Heart left ventricle (tissue), 16 donors: ENCODE measurements at regions of chr17 and their contacts with region 1.

Region 1: DNA sequence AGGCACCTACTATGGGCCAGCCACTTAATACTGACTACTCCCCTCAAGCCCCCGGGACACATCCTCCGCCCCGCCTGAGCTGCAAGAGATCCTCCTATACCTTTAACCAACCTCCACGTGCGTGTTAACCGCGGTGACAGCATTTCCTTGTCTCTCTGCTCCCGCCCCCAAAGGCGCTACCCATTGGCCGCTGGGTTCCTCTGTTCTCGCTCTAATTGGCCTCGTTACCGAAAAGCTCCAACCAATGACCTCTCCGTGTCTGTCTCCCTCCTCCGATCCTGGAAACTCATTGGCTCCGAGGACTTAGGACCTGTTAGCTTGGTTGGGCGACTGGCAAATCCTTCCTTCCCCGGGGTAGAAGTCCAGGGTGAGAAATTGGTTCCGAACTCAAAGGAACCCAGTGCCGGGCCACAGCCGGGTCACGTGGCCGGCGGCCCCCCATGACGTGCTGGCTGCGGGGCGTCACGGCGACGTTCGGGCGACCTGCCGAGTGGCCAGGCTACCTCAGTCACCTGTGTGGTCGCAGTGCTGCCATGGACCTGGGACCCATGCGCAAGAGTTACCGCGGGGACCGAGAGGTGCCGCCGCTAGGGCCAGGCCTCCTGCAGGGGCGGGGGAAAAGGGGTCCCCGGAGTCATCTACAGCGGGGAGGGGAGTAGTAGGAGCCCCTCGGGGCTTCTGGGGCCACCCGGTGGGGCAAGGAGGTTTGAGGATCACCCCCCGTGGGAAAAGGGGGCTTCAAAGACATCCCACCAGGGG is at the start of gene PNPO:
- DNase-seq: peak; percentile 92 to 96 (median 95)
- ATAC-seq: peak; percentile 98 to 99 (median 98)
- H3K4me3 ChIP-seq: peak within 1 kb of the TSS; percentile 64 to 98 (median 84)
- H3K27ac ChIP-seq: peak within 1 kb of the TSS in 11 of 12 donors; percentile 65 to 92 (median 82)
- H3K4me1 ChIP-seq: peaks cover 0 to 45% (median 17%) of the 10 kb centered on the region in 12 donors
- H3K27me3 ChIP-seq: no peaks in the 10 kb centered on the region
- CTCF ChIP-seq: peak in 2 of 12 donors; percentile 5 to 11
- POLR2A ChIP-seq: peak in 1 of 2 donors; percentile 68
- total RNA-seq, gene PNPO: 24.2 to 45.0 (median 36.1) TPM

Region 2: GRCh38 chr17:47889734-47890529 is 51.5 kb before region 1 on chr17:
- intact Hi-C with region 1: loop called in 4 of 10 experiments (anchors 5 kb)
- DNase-seq: peak; percentile 84 to 92 (median 87)
- ATAC-seq: peak; percentile 74 to 93 (median 92)
- H3K4me3 ChIP-seq: no peak overlapping the region
- H3K27ac ChIP-seq: no peak overlapping the region
- H3K4me1 ChIP-seq: peaks cover 0 to 16% (median 8%) of the 10 kb centered on the region in 12 donors
- H3K27me3 ChIP-seq: no peaks in the 10 kb centered on the region
- CTCF ChIP-seq: peak; percentile 89 to 99 (median 96)
- POLR2A ChIP-seq: no peak

Region 3: DNA sequence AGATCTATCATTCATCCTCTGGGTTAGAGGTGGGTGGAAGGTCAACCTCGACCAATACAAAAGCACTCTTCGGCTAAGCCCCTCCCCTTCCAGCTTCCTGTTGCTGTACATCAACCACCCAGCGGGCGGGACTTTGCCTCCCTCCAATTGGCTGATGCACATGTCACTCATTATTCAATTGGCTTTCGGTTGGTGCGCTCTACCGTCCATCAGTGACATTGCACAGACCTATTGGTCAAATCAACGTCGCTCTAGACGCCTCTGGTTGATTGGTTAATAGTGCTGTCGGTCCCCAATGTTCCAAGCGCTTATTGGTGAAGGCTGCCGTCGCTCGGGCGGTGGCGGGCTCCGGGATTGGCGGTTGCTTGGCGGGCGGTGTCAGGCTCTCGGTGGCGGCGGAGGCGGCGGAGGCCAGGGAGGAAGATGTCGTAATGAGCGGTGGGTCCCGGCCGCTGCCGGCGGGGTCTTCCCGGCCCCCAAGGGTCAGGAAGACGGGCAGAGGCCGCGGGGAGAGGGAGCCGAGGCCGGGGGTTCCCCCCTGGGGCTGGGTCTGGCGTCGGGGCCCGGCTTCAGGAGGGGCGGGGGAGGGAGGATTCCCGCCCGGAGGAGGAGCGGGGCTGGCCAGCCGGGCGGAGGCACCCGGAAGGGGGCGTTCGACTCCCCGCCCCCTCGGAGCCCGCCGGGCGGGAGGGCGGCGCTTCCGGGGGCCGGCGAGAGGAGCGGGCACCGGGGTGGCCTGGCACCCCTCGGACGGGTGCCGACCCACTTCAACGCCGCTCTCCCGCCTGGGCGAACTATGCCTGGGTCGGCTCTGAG is 45.4 kb before region 1 on chr17 and contains the start of gene SP2:
- intact Hi-C with region 1: loop called in 9 of 10 experiments (anchors 1 to 5 kb)
- DNase-seq: peak; percentile 99 to 100 (median 99)
- ATAC-seq: peak; percentile 95 to 97 (median 96)
- H3K4me3 ChIP-seq: peak within 1 kb of the TSS; percentile 72 to 94 (median 79)
- H3K27ac ChIP-seq: peak within 1 kb of the TSS; percentile 98 to 100 (median 99)
- H3K4me1 ChIP-seq: peaks cover 0 to 58% (median 48%) of the 10 kb centered on the region in 12 donors
- H3K27me3 ChIP-seq: no peaks in the 10 kb centered on the region
- CTCF ChIP-seq: peak in 7 of 12 donors; percentile 3 to 53 (median 30)
- POLR2A ChIP-seq: peak; percentile 73 to 90
- total RNA-seq, gene SP2: 11.1 to 21.2 (median 16.7) TPM

Region 4: GRCh38 chr17:47905221-47905781 is 36.1 kb before region 1 on chr17:
- intact Hi-C with region 1: loop called in 5 of 10 experiments (anchors 2 to 5 kb)
- DNase-seq: peak; percentile 77 to 89 (median 86)
- ATAC-seq: peak; percentile 83 to 88 (median 86)
- H3K4me3 ChIP-seq: peak overlapping the region in 3 of 12 donors; percentile 1 to 16 (median 6)
- H3K27ac ChIP-seq: peak overlapping the region; percentile 87 to 97 (median 93)
- H3K4me1 ChIP-seq: peaks cover 16 to 97% (median 80%) of the 10 kb centered on the region in 12 donors
- H3K27me3 ChIP-seq: no peaks in the 10 kb centered on the region
- CTCF ChIP-seq: no peak
- POLR2A ChIP-seq: no peak